Head of caudate nucleus (tissue), 42 donors: ENCODE measurements at regions of chr11 and their contacts with region 1.

Region 1: GRCh38 chr11:5441414-5441813 is at the start of gene OR51I1:
- DNase-seq: no peak

Region 2: GRCh38 chr11:5489576-5490357 is 48.4 kb after region 1 on chr11:
- intact Hi-C with region 1: loop called (anchors 10 kb)
- DNase-seq: no peak

Region 3: DNA sequence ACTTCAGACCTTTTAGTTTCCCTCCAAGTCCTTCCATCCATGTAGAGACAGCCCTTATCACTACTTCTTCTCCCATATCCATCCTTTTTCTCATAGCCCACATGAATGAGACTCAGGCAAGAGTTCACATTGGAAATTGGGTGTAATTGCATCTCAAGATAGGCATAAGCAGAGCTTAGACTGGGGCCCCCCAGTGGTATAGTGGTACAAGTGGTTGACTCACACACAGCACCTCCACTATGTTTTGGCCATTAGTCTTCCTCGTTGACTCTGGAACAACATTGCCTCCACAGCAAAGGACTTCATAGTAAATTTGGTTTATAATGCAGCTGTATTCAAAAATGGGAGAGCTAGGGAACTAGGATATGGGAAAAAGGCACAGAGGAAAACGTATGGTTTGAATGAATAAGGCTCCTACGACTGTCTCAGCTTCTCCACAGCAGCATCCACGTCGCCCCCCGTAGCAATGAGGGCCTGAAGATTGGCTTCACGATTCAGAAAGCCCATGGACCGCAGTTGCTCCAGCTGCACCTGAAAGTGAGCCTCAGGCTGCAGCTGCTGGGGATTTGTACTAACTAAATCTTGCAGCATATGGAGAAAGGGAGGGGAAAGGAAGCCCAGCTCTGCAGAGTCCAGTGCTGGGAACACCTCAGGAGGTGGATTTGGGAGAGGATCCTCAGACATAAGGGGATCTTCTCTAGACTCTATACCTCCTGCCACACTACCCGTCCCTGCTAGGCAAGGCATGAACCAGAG is 65.9 kb after region 1 on chr11:
- intact Hi-C with region 1: no loop called
- DNase-seq: no peak

Region 4: GRCh38 chr11:5522308-5522707 is 80.9 kb after region 1 on chr11:
- intact Hi-C with region 1: no loop called
- DNase-seq: no peak